ENCODE measurements at regions of chr17 and their contacts with region 1.

Region 1: GRCh38 chr17:28878981-28879380 is 18.6 kb downstream of the FLOT2 start:
- DNase-seq: peak; percentile 80
- ATAC-seq: peak; percentile 98
- H3K4me3 Mint-ChIP-seq: no peak overlapping the region
- H3K27ac Mint-ChIP-seq: peak overlapping the region; percentile 18; the same call in 1 of the 2 replicates
- H3K4me1 Mint-ChIP-seq: peaks cover 6% of the 10 kb centered on the region; the same call in 1 of the 2 replicates
- H3K27me3 Mint-ChIP-seq: peaks cover 7% of the 10 kb centered on the region
- CTCF ChIP-seq: peak; percentile 31; the same call in 1 of the 2 replicates

Region 2: DNA sequence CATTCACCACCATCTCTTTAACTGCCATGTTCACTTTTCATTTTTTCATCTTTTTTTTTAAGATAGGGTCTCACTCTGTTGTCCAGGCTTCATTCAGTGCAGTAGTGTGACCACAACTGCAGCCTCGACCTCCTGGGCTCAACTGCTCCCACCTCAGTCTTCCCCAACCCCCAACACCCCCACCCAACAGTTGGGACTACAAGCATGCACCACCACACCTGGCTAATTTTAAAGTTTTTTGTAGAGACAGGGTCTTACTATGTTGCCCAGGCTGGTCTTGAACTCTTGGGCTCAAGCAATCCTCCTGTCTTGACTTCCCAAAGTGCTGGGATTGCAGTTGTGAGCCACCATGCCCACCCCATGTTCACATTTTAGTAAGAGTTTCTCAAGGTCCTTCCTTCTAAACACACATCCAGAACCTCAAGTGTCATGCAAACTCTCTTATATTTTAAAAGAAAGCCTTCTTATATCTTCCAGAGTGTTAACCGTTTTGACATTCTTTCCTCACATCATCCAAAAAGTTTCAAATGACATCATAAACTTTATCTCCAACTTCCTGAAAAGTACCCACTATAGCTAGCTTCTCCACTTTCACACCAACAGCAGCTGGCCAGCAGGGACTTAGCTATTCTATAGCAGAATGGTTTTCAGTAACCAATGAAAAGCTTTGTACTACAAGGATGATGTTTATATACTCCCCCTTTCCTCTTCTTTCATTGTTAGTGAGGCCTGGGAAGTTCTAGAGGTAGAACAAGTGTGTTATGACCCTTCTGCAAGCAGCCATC is 85.9 kb before region 1 on chr17:
- CTCF ChIA-PET with region 1: no interaction called
- POLR2A ChIA-PET with region 1: no interaction called
- DNase-seq: no peak
- ATAC-seq: peak; percentile 20; the same call in 1 of the 2 replicates
- H3K4me3 Mint-ChIP-seq: no peak overlapping the region
- H3K27ac Mint-ChIP-seq: peak overlapping the region; percentile 85; the same call in 1 of the 2 replicates
- H3K4me1 Mint-ChIP-seq: 0 out of 2 replicates have a peak, but pooled peaks cover 2% of the 10 kb centered on the region
- H3K27me3 Mint-ChIP-seq: no peaks in the 10 kb centered on the region
- CTCF ChIP-seq: no peak

Region 3: GRCh38 chr17:28849281-28849680 is 29.7 kb before region 1 on chr17:
- CTCF ChIA-PET with region 1: interaction called, 25 read pairs
- POLR2A ChIA-PET with region 1: no interaction called
- DNase-seq: no peak
- ATAC-seq: peak; percentile 60
- H3K4me3 Mint-ChIP-seq: no peak overlapping the region
- H3K27ac Mint-ChIP-seq: no peak overlapping the region; the same call in 1 of the 2 replicates
- H3K4me1 Mint-ChIP-seq: peaks cover 3% of the 10 kb centered on the region; the same call in 1 of the 2 replicates
- H3K27me3 Mint-ChIP-seq: no peaks in the 10 kb centered on the region
- CTCF ChIP-seq: no peak

Region 4: DNA sequence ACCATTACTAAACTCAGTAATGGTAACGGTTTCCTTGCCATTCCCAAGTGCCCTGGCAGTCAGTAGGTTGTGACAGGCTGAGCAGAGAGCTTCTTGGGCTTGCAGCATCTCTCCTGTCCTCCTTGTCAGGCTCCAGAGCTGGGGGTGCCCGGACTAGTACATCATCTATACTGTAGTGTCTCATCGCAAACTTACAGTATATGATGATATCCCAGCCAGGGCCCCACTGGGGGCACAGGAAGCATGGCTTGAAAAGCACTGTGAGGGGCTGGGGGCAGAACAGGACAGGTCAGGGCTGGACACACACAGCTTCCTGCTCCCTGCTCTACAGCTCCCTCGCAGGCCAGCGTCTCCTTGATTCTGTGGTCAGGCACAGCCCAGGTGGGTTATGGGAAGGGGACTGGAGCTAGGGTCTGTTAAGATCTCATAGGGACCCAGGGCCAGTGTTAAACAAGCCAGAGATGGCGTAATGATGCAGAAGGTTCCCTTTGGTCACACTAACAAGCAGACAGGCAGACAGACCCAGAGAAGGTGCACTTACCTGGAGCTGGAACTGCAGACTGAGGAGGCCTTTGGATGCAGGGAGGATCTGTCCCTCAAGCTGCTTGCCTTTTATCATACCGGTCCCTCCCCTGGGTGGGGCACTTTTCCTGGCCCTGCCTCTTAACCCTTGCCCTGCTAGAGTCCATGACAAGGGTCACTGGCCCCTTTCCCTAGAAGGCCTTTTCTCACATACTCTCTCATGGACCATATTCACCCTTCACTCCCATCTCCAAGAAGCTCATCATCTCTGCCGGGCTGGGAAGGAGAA is 17.4 kb before region 1 on chr17:
- CTCF ChIA-PET with region 1: interaction called, 12 read pairs
- POLR2A ChIA-PET with region 1: no interaction called
- DNase-seq: peak; percentile 39
- ATAC-seq: peak; percentile 77
- H3K4me3 Mint-ChIP-seq: no peak overlapping the region; the same call in 1 of the 2 replicates
- H3K27ac Mint-ChIP-seq: peak overlapping the region; percentile 88; the same call in 1 of the 2 replicates
- H3K4me1 Mint-ChIP-seq: peaks cover 17% of the 10 kb centered on the region
- H3K27me3 Mint-ChIP-seq: no peaks in the 10 kb centered on the region
- CTCF ChIP-seq: no peak

Region 5: GRCh38 chr17:28896884-28897768 is 18.1 kb after region 1 on chr17 and contains the start of gene FLOT2:
- CTCF ChIA-PET with region 1: interaction called, 25 read pairs
- POLR2A ChIA-PET with region 1: no interaction called
- DNase-seq: peak; percentile 72
- ATAC-seq: peak; percentile 69
- H3K4me3 Mint-ChIP-seq: peak within 1 kb of the TSS; percentile 94
- H3K27ac Mint-ChIP-seq: peak within 1 kb of the TSS; percentile 93
- H3K4me1 Mint-ChIP-seq: peaks cover 33% of the 10 kb centered on the region
- H3K27me3 Mint-ChIP-seq: no peaks in the 10 kb centered on the region
- CTCF ChIP-seq: no peak
- total RNA-seq, gene FLOT2: 139 to 153 TPM (median 144 TPM) in 3 replicates

Region 6: DNA sequence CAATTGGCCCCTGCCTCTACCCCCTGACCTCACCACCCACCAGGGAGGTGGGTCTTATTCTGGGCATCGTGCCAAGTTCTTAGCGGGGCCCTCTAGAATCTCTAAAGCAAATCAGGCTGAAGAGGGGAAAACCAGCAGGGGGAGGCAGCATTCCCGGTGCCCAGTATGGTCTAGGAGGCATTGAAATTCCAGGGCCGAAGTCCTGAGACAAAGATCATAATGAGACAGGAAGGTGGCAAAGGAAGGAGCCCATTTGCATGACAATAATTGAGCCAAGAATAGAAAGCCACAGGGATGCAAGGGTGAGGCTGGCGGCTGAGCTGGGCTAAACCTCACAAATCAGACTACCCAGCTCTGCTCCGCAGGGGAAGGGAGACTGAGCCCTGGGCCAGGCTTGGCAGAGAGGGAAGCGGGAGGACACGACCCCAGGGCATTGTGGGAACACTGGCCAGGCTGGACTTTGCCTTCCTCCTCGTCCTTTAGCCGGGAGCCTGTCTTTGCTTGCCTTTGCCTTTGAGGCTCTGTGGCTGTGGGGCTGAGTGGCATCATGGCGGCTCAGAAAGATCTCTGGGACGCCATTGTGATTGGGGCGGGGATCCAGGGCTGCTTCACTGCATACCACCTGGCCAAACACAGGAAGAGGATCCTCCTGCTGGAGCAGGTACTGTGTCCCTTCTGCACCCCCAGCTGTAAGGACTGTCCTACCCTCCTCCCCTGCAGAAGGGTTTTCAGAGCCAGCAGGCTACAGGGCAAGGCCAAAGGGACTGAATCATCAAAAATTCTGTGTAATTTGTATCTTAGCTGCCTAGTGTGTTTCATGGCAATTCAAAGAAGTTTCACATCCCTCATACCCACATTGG is 163.9 kb after region 1 on chr17 and contains the start of gene PIPOX:
- CTCF ChIA-PET with region 1: no interaction called
- POLR2A ChIA-PET with region 1: no interaction called
- DNase-seq: peak; percentile 80
- ATAC-seq: peak; percentile 87
- H3K4me3 Mint-ChIP-seq: peak within 1 kb of the TSS; percentile 41
- H3K27ac Mint-ChIP-seq: peak within 1 kb of the TSS; percentile 98
- H3K4me1 Mint-ChIP-seq: peaks cover 63% of the 10 kb centered on the region
- H3K27me3 Mint-ChIP-seq: no peaks in the 10 kb centered on the region
- CTCF ChIP-seq: no peak
- total RNA-seq, gene PIPOX: 32.4 to 34.2 TPM (median 34.1 TPM) in 3 replicates

Measured in WTC11 (cell line).